Lower leg skin (tissue), 4 donors: ENCODE measurements at regions of chr14 and their contacts with region 1.

Region 1: GRCh38 chr14:23446291-23446851 is 10.9 kb upstream of the MYH7 start:
- DNase-seq: no peak
- H3K4me3 ChIP-seq: no peak overlapping the region
- CTCF ChIP-seq: no peak
- POLR2A ChIP-seq: no peak

Region 2: GRCh38 chr14:23345987-23346692 is 100.2 kb before region 1 on chr14:
- intact Hi-C with region 1: loop called (anchors 10 kb)
- DNase-seq: no peak
- H3K4me3 ChIP-seq: no peak overlapping the region
- CTCF ChIP-seq: no peak
- POLR2A ChIP-seq: no peak

Region 3: DNA sequence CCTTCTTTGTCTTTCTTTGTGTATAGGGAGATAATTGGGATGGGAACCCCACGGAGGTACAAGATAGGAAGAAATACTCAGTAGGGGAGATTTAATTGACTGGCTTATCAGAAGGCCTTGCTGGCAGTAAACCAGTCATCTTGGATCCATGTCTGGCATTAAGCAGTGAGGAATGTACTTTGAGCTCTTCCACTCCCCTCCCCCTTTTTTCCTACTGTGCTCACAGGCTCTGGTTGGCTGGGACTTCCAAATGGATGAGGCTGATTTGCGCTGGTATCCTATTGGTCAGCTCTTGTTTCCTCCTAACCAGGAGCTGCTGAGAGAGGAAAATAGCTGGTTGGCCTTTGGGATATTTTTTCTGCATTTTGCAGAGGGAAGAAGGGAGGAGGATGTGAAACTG is 47.9 kb after region 1 on chr14:
- intact Hi-C with region 1: no loop called
- DNase-seq: no peak
- H3K4me3 ChIP-seq: no peak overlapping the region
- CTCF ChIP-seq: no peak
- POLR2A ChIP-seq: no peak

Region 4: GRCh38 chr14:23605931-23606585 is 159.7 kb after region 1 on chr14:
- intact Hi-C with region 1: no loop called
- DNase-seq: no peak
- H3K4me3 ChIP-seq: no peak overlapping the region
- CTCF ChIP-seq: no peak
- POLR2A ChIP-seq: no peak